ENCODE measurements at regions of chr1 and their contacts with region 1.

Region 1: GRCh38 chr1:152869808-152870419 is 8.2 kb upstream of the SMCP start:
- DNase-seq: peak; percentile 71 to 81
- ATAC-seq: peak; percentile 87 to 93
- H3K4me3 ChIP-seq: no peak overlapping the region
- H3K27ac ChIP-seq: no peak overlapping the region
- H3K4me1 ChIP-seq: no peaks in the 10 kb centered on the region
- CTCF ChIP-seq: peak; percentile 66
- EP300 ChIP-seq: no peak
- POLR2A ChIP-seq: no peak
- RAD21 ChIP-seq: peak; percentile 56 to 65; a peak in 4 of 5 replicates

Region 2: DNA sequence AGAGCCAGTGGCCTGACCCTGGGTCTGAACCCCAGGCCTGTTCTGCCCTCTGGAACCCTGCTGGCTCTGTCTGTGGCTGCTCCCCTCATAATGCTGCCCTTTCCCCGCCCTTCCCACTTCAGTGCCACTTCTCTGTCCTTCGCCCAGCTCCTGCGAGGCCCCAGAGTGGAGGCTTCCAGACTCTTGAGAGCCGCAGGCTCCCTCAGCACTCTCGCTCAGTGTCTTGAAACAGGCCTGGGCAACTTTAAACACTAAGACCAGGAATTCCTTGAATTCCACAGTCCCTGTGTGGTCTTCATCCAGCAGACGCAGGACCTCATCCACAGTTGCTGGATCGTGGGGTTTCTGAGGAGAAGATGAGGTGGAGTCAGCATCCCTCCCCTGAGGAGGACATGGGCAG is 459.3 kb before region 1 on chr1:
- CTCF ChIA-PET with region 1: no interaction called
- POLR2A ChIA-PET with region 1: no interaction called
- DNase-seq: no peak
- ATAC-seq: peak in 1 of 2 experiments; percentile 27; a peak in 1 of 6 replicates
- H3K4me3 ChIP-seq: no peak overlapping the region
- H3K27ac ChIP-seq: no peak overlapping the region
- H3K4me1 ChIP-seq: no peaks in the 10 kb centered on the region
- CTCF ChIP-seq: no peak
- EP300 ChIP-seq: no peak
- POLR2A ChIP-seq: no peak
- RAD21 ChIP-seq: no peak

Region 3: GRCh38 chr1:152926091-152926490 is 56.2 kb after region 1 on chr1:
- CTCF ChIA-PET with region 1: interaction called, 40 read pairs
- POLR2A ChIA-PET with region 1: no interaction called
- DNase-seq: peak in 1 of 2 experiments; percentile 48
- ATAC-seq: peak; percentile 90 to 94
- H3K4me3 ChIP-seq: no peak overlapping the region
- H3K27ac ChIP-seq: no peak overlapping the region
- H3K4me1 ChIP-seq: peaks cover 6% of the 10 kb centered on the region; the same call in 1 of the 3 replicates
- CTCF ChIP-seq: peak; percentile 51
- EP300 ChIP-seq: no peak
- POLR2A ChIP-seq: no peak
- RAD21 ChIP-seq: peak; percentile 62 to 74

Region 4: DNA sequence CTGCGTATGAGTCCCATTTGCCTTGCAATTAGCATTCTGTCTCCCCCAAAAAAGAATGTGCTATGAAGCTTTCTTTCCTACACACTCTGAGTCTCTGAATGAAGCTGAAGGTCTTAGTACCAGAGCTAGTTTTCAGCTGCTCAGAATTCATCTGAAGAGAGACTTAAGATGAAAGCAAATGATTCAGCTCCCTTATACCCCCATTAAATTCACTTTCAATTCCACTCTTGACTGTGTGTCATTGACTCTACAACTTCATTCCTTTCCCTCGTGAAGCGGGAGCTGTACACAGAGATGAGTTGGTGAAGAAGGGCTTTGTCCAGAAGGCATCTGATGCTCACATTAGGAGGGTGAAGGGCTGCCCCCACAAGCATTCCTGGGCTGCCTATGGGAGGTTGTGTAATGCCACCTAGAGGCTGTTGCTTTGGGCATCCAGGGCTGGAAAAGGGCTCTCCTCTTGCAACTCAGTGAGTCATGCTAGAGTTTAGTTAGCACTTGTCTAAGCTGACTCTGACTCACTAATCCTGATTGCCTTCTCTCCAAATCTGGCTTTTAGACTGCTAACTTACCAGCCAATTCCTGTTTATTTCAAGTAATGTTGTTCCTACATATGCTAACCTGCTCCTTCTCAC is 162.9 kb after region 1 on chr1:
- CTCF ChIA-PET with region 1: interaction called, 11 read pairs
- POLR2A ChIA-PET with region 1: no interaction called
- DNase-seq: peak; percentile 23 to 44
- ATAC-seq: peak; percentile 97 to 99
- H3K4me3 ChIP-seq: no peak overlapping the region
- H3K27ac ChIP-seq: no peak overlapping the region
- H3K4me1 ChIP-seq: no peaks in the 10 kb centered on the region
- CTCF ChIP-seq: peak; percentile 21; the same call in 2 of the 3 replicates
- EP300 ChIP-seq: no peak
- POLR2A ChIP-seq: no peak
- RAD21 ChIP-seq: peak; percentile 26 to 36; a peak in 2 of 5 replicates

Region 5: DNA sequence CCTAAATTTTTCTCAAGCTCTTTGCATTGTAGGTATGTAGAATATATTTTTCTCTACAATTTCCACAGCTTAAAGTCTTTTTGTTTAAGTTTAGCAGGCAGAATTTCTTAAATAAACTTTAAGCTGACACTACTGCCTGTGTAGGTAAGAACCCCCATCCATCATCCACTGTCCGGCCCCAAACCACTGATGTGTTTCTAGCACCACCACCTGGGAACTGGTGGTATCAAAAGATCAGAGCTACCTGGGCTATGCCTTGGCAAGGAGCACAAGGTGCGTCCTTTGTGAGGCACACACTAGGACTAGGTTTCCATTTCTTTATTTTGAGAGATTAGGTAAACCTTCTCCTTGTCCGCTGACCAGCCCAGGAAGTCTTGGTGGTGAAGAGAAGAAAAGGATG is 322.8 kb after region 1 on chr1:
- CTCF ChIA-PET with region 1: interaction called, 31 read pairs
- POLR2A ChIA-PET with region 1: no interaction called
- DNase-seq: peak in 1 of 2 experiments; percentile 11
- ATAC-seq: peak; percentile 55 to 74; a peak in 4 of 6 replicates
- H3K4me3 ChIP-seq: no peak overlapping the region
- H3K27ac ChIP-seq: no peak overlapping the region
- H3K4me1 ChIP-seq: no peaks in the 10 kb centered on the region
- CTCF ChIP-seq: no peak
- EP300 ChIP-seq: no peak
- POLR2A ChIP-seq: no peak
- RAD21 ChIP-seq: peak; percentile 28 to 61; a peak in 3 of 5 replicates

Region 6: DNA sequence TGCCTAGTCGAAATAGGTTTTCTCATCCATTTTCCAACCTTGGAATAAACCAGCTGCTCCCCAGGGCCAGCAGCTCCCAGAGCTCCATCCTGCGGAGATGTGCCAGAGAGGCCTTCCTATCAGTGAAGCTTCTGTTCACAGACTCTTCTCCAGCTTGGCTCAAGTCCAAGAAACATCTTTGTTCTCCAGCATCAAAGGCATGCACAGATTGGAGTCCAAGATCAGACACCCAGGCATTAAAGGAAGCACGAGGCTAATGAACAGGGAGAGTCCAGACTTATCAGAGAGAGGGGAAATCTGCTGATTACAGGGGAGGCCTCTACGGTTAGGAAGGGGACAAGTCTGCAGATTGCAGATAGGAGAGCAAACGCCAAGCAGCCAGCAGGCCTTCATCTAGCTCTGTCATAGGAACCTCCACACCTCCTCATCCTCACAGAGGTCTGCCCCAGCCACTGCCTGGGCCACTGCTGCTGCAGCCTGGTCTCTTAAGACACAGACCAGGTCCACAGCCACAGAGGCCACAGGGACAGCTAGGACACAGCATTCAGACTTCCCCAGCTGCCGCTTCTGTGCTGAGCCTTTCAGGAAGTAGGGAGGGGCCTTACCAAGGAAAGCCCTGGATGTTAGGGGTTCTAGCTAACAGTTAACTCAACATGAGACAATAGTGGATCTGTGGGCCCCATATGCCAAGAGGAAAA is 350.8 kb after region 1 on chr1:
- CTCF ChIA-PET with region 1: interaction called, 66 read pairs
- POLR2A ChIA-PET with region 1: no interaction called
- DNase-seq: no peak
- ATAC-seq: no peak
- H3K4me3 ChIP-seq: no peak overlapping the region
- H3K27ac ChIP-seq: no peak overlapping the region
- H3K4me1 ChIP-seq: no peaks in the 10 kb centered on the region
- CTCF ChIP-seq: no peak
- EP300 ChIP-seq: no peak
- POLR2A ChIP-seq: no peak
- RAD21 ChIP-seq: no peak